Activated B cell treated with CpG ODN at 0.5 μM for 24 hours (primary cell): ENCODE measurements at regions of chr6 and their contacts with region 1.

Region 1: GRCh38 chr6:118893807-118894424 is at the start of gene ASF1A:
- DNase-seq: peak; percentile 86
- ATAC-seq: peak; percentile 59
- H3K4me3 Mint-ChIP-seq: peak within 1 kb of the TSS; percentile 99
- H3K27ac Mint-ChIP-seq: peak within 1 kb of the TSS; percentile 90
- H3K4me1 Mint-ChIP-seq: peaks cover 65% of the 10 kb centered on the region
- H3K27me3 Mint-ChIP-seq: no peaks in the 10 kb centered on the region
- CTCF ChIP-seq: no peak
- total RNA-seq, gene ASF1A: 12.1 and 13.1 TPM in 2 replicates

Region 2: GRCh38 chr6:118651282-118652050 is 242.4 kb before region 1 on chr6 and contains the start of gene CEP85L:
- CTCF ChIA-PET with region 1: no interaction called
- POLR2A ChIA-PET with region 1: interaction called, 5 read pairs
- intact Hi-C with region 1: loop called (anchors 1 kb)
- DNase-seq: peak; percentile 85
- ATAC-seq: peak; percentile 91
- H3K4me3 Mint-ChIP-seq: peak within 1 kb of the TSS; percentile 98
- H3K27ac Mint-ChIP-seq: peak within 1 kb of the TSS; percentile 93
- H3K4me1 Mint-ChIP-seq: peaks cover 22% of the 10 kb centered on the region
- H3K27me3 Mint-ChIP-seq: no peaks in the 10 kb centered on the region
- CTCF ChIP-seq: no peak
- total RNA-seq, gene CEP85L: 14.6 and 21.8 TPM in 2 replicates

Region 3: GRCh38 chr6:118800394-118801071 is 93.4 kb before region 1 on chr6:
- CTCF ChIA-PET with region 1: interaction called, 13 read pairs
- POLR2A ChIA-PET with region 1: no interaction called
- intact Hi-C with region 1: loop called (anchors 1 kb)
- DNase-seq: peak; percentile 34
- ATAC-seq: peak; percentile 91
- H3K4me3 Mint-ChIP-seq: peak overlapping the region; percentile 52
- H3K27ac Mint-ChIP-seq: no peak overlapping the region
- H3K4me1 Mint-ChIP-seq: peaks cover 25% of the 10 kb centered on the region
- H3K27me3 Mint-ChIP-seq: no peaks in the 10 kb centered on the region
- CTCF ChIP-seq: peak; percentile 25

Region 4: DNA sequence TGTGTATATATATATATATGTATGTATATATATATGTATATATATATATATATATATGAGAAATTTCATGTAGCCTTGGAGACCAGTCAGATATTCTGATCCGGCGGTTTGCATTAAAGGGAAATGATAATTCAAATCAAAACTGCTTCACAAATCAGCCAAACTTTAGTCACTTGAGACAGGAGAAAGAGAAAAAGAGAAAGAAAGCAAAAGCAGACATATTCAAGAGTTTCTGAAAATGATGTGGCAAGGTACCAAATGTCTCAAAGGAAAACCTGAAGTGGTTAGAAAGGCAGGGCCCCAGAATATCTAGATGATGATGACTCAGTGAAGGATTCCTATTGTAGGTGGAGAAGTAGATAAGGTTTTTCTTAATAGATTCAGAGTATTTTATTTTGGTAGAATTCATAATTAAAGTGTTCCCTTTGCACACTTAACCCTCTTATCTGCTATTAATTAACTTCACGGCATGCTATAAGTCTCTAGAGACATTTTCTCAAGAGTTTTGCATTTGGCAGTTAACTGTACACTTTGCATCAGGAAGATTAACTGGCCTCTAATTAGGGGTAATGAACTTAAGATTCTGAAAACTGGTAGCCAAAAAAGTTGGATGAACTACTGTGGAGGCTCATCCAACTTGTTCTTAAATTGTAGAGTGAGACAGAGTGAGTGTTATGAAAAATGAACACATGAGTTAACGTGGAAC is 50.1 kb before region 1 on chr6:
- CTCF ChIA-PET with region 1: interaction called, 3 read pairs
- POLR2A ChIA-PET with region 1: interaction called, 3 read pairs
- intact Hi-C with region 1: loop called (anchors 1 kb)
- DNase-seq: no peak
- ATAC-seq: peak; percentile 84
- H3K4me3 Mint-ChIP-seq: no peak overlapping the region
- H3K27ac Mint-ChIP-seq: no peak overlapping the region
- H3K4me1 Mint-ChIP-seq: peaks cover 27% of the 10 kb centered on the region
- H3K27me3 Mint-ChIP-seq: no peaks in the 10 kb centered on the region
- CTCF ChIP-seq: no peak

Region 5: GRCh38 chr6:118934461-118935330 is 40.8 kb after region 1 on chr6 and contains the start of gene MCM9:
- CTCF ChIA-PET with region 1: no interaction called
- POLR2A ChIA-PET with region 1: interaction called, 24 read pairs
- intact Hi-C with region 1: loop called (anchors 1 kb)
- DNase-seq: peak; percentile 90
- ATAC-seq: peak; percentile 92
- H3K4me3 Mint-ChIP-seq: peak within 1 kb of the TSS; percentile 89
- H3K27ac Mint-ChIP-seq: peak within 1 kb of the TSS; percentile 91
- H3K4me1 Mint-ChIP-seq: peaks cover 32% of the 10 kb centered on the region
- H3K27me3 Mint-ChIP-seq: no peaks in the 10 kb centered on the region
- CTCF ChIP-seq: no peak
- total RNA-seq, gene MCM9: 33.3 and 37.0 TPM in 2 replicates